GM12878 (cell line): ENCODE measurements at regions of chr1 and their contacts with region 1.

Region 1: DNA sequence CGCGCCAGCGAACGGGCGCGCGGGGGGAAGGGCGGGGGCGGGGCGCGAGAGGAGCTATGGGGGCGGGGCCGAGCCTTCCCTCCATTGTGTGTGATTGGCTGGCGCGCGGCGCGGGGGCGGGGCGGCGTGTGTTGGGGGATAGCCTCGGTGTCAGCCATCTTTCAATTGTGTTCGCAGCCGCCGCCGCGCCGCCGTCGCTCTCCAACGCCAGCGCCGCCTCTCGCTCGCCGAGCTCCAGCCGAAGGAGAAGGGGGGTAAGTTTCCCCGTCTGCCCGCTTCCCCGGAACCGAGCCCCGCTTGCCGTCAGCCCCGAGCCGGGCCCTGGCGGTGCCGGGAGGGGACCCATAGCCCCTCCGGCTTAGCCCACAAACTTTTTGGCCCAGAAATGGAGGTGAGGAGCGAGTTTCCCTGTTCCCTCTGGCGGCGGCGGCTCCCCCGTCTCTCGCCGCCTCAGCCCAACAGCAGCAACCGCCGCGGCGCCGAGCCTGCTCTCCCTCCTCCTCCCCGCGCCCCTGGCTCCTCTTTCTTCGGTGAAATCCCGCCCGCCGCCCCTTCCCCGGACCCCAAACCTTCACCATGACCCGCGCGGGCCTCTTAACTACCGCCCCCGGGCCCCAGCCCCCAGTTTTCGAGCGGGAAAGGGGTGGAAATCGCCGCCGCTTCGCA is at the start of gene H3-3A:
- DNase-seq: peak; percentile 66
- ATAC-seq: peak; percentile 88
- H3K4me3 ChIP-seq: peak within 1 kb of the TSS; percentile 91
- H3K27ac ChIP-seq: peak within 1 kb of the TSS; percentile 97
- H3K4me1 ChIP-seq: peaks cover 8% of the 10 kb centered on the region
- H3K27me3 ChIP-seq: no peaks in the 10 kb centered on the region
- CTCF ChIP-seq: no peak
- EP300 ChIP-seq: no peak
- POLR2A ChIP-seq: peak; percentile 91
- RAD21 ChIP-seq: no peak
- polyA plus RNA-seq, gene H3-3A: 254 to 435 TPM

Region 2: DNA sequence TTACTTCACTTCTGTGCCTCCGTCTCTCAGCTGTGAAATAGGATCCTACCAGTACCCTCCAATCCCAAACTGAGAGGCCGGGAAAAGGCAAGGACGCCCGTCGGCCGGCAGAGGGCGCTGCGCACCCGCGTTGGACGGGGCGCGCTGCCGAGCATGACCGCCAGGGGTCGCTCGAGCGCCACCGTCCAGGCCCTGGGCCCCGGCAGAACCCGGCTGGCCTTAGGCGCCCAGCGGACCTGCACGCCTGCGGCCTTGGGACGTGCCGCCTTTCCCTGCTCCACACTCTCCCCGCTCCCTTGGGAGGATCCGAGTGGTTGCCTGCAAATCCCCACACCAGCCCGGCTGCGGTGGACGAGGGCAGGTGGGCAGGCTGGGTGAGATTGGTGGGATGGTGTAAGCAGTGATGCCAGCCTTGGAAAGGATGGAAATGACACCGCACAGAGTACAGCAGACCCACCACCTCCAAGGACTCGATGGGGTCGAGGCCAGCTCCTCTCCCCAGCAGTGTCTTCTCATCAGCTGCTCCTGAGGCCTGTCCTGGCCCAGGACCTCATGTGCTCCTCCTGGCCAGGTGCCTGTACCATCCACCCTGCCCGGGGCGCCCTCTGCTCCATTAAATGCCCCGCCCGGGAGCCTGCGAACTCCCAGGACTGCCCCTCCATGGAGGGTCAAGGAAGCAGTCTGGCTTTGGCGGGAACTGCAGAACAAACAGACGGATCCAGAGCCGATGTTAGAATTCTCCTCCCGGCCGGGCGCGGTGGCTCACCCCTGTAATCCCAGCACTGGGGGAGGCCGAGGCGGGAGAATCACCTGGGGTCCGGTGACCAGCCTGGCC is 587.5 kb before region 1 on chr1:
- CTCF ChIA-PET with region 1: interaction called, 4 read pairs
- POLR2A ChIA-PET with region 1: no interaction called
- RAD21 ChIA-PET with region 1: interaction called, 3 read pairs
- SMC1A ChIA-PET with region 1: no interaction called
- in situ Hi-C with region 1: no loop called
- intact Hi-C with region 1: loop called (anchors 2 kb)
- DNase-seq: no peak
- ATAC-seq: peak; percentile 86
- H3K4me3 ChIP-seq: no peak overlapping the region
- H3K27ac ChIP-seq: no peak overlapping the region
- H3K4me1 ChIP-seq: peaks cover 21% of the 10 kb centered on the region
- H3K27me3 ChIP-seq: no peaks in the 10 kb centered on the region
- CTCF ChIP-seq: peak; percentile 99 to 100 (median 100); a peak in 5 of 6 replicates
- EP300 ChIP-seq: no peak
- POLR2A ChIP-seq: no peak
- RAD21 ChIP-seq: peak; percentile 99

Region 3: GRCh38 chr1:225881969-225882693 is 180.6 kb before region 1 on chr1 and contains the start of gene TMEM63A:
- CTCF ChIA-PET with region 1: no interaction called
- POLR2A ChIA-PET with region 1: no interaction called
- RAD21 ChIA-PET with region 1: no interaction called
- SMC1A ChIA-PET with region 1: no interaction called
- in situ Hi-C with region 1: no loop called
- intact Hi-C with region 1: no loop called
- DNase-seq: peak; percentile 40
- ATAC-seq: peak; percentile 88
- H3K4me3 ChIP-seq: peak within 1 kb of the TSS; percentile 88
- H3K27ac ChIP-seq: peak within 1 kb of the TSS; percentile 77
- H3K4me1 ChIP-seq: peaks cover 30% of the 10 kb centered on the region
- H3K27me3 ChIP-seq: no peaks in the 10 kb centered on the region
- CTCF ChIP-seq: peak; percentile 31 to 42 (median 40); a peak in 5 of 6 replicates
- EP300 ChIP-seq: no peak
- POLR2A ChIP-seq: peak; percentile 81
- RAD21 ChIP-seq: no peak
- polyA plus RNA-seq, gene TMEM63A: 1.3 to 1.8 TPM

Region 4: GRCh38 chr1:225987491-225988316 is 75.0 kb before region 1 on chr1:
- CTCF ChIA-PET with region 1: interaction called, 86 read pairs
- POLR2A ChIA-PET with region 1: interaction called, 15 read pairs
- RAD21 ChIA-PET with region 1: interaction called, 42 read pairs
- SMC1A ChIA-PET with region 1: interaction called, 52 read pairs
- in situ Hi-C with region 1: no loop called
- intact Hi-C with region 1: loop called (anchors 2 kb)
- DNase-seq: no peak
- ATAC-seq: peak; percentile 42
- H3K4me3 ChIP-seq: no peak overlapping the region
- H3K27ac ChIP-seq: no peak overlapping the region
- H3K4me1 ChIP-seq: peaks cover 26% of the 10 kb centered on the region
- H3K27me3 ChIP-seq: no peaks in the 10 kb centered on the region
- CTCF ChIP-seq: peak; percentile 62 to 70 (median 63)
- EP300 ChIP-seq: no peak
- POLR2A ChIP-seq: no peak
- RAD21 ChIP-seq: peak; percentile 50

Region 5: DNA sequence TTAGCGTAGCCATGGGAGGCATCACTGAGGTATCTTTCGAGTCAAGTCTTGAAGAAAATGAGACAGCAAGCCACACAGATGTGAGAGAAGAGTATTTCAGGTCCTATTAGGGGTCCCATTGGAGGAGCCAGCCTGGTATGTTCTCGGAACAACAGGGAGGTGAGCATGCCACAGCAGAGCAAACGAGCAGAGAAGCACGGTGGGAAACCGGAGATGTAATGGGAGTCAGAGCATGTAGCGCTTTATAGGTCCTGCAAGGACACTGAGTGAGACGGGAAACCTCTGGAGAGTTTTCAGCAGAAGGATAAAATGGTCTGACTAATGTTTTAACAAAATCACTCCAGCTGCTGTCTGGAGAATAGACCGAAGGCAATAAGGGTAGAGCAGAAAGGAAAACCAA is 15.7 kb after region 1 on chr1:
- CTCF ChIA-PET with region 1: interaction called, 26 read pairs
- POLR2A ChIA-PET with region 1: interaction called, 13 read pairs
- RAD21 ChIA-PET with region 1: interaction called, 16 read pairs
- SMC1A ChIA-PET with region 1: interaction called, 17 read pairs
- in situ Hi-C with region 1: no loop called
- intact Hi-C with region 1: no loop called
- DNase-seq: no peak
- ATAC-seq: no peak
- H3K4me3 ChIP-seq: no peak overlapping the region
- H3K27ac ChIP-seq: no peak overlapping the region
- H3K4me1 ChIP-seq: peaks cover 3% of the 10 kb centered on the region; the same call in 1 of the 2 replicates
- H3K27me3 ChIP-seq: no peaks in the 10 kb centered on the region
- CTCF ChIP-seq: no peak
- EP300 ChIP-seq: no peak
- POLR2A ChIP-seq: no peak
- RAD21 ChIP-seq: no peak

Region 6: GRCh38 chr1:226100436-226101391 is 38.0 kb after region 1 on chr1:
- CTCF ChIA-PET with region 1: interaction called, 16 read pairs
- POLR2A ChIA-PET with region 1: interaction called, 5 read pairs
- RAD21 ChIA-PET with region 1: interaction called, 7 read pairs
- SMC1A ChIA-PET with region 1: interaction called, 13 read pairs
- in situ Hi-C with region 1: no loop called
- intact Hi-C with region 1: no loop called
- DNase-seq: no peak
- ATAC-seq: peak; percentile 79
- H3K4me3 ChIP-seq: peak overlapping the region; percentile 53
- H3K27ac ChIP-seq: no peak overlapping the region
- H3K4me1 ChIP-seq: peaks cover 10% of the 10 kb centered on the region; the same call in 1 of the 2 replicates
- H3K27me3 ChIP-seq: no peaks in the 10 kb centered on the region
- CTCF ChIP-seq: no peak
- EP300 ChIP-seq: no peak
- POLR2A ChIP-seq: no peak
- RAD21 ChIP-seq: no peak

Region 7: DNA sequence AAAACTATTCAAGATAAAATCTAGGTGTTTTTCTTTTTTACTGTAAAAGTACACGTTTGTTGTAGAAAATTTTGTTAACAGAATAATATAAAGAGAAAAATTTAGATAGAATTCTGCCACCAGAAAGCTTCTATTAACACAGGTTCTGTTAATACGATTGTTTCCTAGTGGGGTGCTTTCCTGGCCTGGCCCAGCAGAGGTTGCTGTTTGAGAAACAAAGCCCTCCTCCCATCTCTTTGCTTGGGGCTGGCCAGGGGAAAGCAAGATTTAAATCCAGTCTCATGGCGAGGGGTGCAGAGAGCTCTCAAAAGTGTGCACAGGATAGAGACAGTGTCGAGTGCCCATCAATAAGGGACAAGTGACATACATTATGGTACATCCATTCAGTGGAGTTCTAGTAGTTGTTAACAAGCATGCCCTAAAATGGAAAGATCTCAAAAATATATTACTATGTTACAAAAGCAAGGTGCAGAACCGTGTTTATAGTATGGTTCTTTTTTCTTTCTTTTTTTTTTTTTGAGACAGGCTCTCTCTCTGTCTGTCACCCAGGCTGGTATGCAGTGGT is 138.4 kb after region 1 on chr1:
- CTCF ChIA-PET with region 1: interaction called, 10 read pairs
- POLR2A ChIA-PET with region 1: no interaction called
- RAD21 ChIA-PET with region 1: interaction called, 6 read pairs
- SMC1A ChIA-PET with region 1: interaction called, 3 read pairs
- in situ Hi-C with region 1: no loop called
- intact Hi-C with region 1: loop called (anchors 2 kb)
- DNase-seq: no peak
- ATAC-seq: peak; percentile 80
- H3K4me3 ChIP-seq: no peak overlapping the region
- H3K27ac ChIP-seq: no peak overlapping the region
- H3K4me1 ChIP-seq: peaks cover 3% of the 10 kb centered on the region; the same call in 1 of the 2 replicates
- H3K27me3 ChIP-seq: no peaks in the 10 kb centered on the region; a peak in 1 of 4 replicates
- CTCF ChIP-seq: peak; percentile 59 to 67 (median 60)
- EP300 ChIP-seq: no peak
- POLR2A ChIP-seq: no peak
- RAD21 ChIP-seq: peak; percentile 72

Region 8: DNA sequence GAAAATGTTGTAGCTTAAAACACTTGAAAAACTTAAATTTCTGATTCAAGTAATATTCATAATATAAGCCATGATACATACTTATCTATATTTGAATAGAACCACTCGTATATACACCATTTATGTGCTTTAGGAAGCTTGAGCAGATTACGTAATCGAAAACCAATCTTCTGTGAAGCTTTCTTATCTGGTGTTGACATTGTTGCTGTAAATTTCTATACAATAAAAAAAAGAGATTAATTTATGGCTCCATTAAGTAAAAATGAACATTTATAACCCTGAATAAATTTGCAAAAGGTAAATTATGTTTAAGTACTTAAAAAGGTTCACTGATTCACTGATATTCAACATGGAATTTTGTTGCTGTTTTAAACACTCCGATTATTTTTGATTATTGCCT is 224.9 kb after region 1 on chr1:
- CTCF ChIA-PET with region 1: no interaction called
- POLR2A ChIA-PET with region 1: no interaction called
- RAD21 ChIA-PET with region 1: no interaction called
- SMC1A ChIA-PET with region 1: no interaction called
- in situ Hi-C with region 1: no loop called
- intact Hi-C with region 1: no loop called
- DNase-seq: no peak
- ATAC-seq: no peak
- H3K4me3 ChIP-seq: no peak overlapping the region
- H3K27ac ChIP-seq: no peak overlapping the region
- H3K4me1 ChIP-seq: no peaks in the 10 kb centered on the region
- H3K27me3 ChIP-seq: no peaks in the 10 kb centered on the region
- CTCF ChIP-seq: no peak
- EP300 ChIP-seq: no peak
- POLR2A ChIP-seq: no peak
- RAD21 ChIP-seq: no peak